Breast epithelium (tissue), 4 donors: ENCODE measurements at regions of chr10 and their contacts with region 1.

Region 1: DNA sequence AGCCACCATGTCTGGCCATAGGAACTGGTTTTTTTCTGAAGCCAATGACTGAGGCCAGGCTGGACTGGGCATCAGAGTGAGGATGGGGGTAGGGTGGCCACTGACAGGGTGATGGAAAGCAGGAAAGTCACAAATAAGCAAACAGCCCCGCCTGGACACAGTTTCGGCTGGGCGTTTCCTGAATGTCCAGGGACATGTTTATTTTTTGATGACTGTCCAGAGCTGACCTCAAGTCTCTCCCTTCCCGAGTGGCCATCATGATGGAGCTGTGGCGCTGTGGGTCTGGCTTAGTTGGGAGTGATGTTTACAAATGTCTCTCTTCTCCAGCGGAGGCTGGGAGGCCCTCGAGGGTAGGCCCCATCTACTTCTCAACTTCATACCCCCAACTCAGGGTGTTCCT is 37.1 kb upstream of the COMTD1 start:
- DNase-seq: no peak
- H3K4me3 ChIP-seq: no peak overlapping the region
- H3K27ac ChIP-seq: no peak overlapping the region
- H3K4me1 ChIP-seq: no peaks in the 10 kb centered on the region
- H3K27me3 ChIP-seq: no peaks in the 10 kb centered on the region
- CTCF ChIP-seq: no peak
- POLR2A ChIP-seq: no peak

Region 2: GRCh38 chr10:75904499-75905283 is 631.8 kb after region 1 on chr10:
- intact Hi-C with region 1: loop called (anchors 5 kb)
- DNase-seq: no peak
- H3K4me3 ChIP-seq: no peak overlapping the region
- H3K27ac ChIP-seq: no peak overlapping the region
- H3K4me1 ChIP-seq: no peaks in the 10 kb centered on the region
- H3K27me3 ChIP-seq: no peaks in the 10 kb centered on the region
- CTCF ChIP-seq: no peak
- POLR2A ChIP-seq: no peak